ENCODE measurements at regions of chr19 and their contacts with region 1.

Region 1: DNA sequence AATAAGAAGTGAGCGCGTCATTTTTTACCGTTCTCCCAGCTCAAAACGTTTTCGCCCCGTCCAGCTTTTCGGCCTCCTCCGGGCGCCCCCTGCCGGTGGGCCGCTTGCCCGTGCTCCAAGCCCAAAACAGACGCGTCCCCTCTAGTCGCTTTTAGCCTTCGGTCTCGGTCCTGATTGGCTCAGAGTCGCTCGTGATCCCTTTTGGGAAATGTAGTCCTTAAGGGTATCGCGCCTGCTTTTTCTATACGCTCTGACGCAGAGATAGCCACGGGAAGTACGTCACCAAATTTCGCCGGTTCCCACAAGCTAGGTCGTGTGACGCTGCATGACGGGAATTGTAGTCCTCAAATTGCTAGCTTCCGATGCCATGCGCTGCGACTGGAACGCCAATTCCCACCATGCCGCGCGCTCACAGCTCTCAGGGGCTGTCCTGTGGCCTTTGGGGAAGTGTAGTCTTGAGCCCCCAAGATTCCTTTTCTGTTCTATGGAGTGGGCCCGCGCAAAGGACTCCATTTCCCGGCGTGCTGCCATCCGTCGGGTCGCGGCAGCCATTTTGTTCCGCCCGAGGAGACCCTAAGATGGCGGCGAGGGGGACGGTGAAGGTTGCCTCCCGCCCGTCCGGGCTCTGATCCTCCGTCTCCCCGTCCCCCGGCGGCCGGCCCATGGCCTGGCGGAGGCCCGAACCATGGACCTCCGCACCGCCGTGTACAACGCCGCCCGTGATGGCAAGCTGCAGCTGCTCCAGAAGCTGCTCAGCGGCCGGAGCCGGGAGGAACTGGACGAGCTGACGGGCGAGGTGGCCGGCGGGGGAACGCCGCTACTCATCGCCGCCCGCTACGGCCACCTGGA is at the start of gene FEM1A:
- DNase-seq: peak; percentile 96 to 100 (median 98)
- ATAC-seq: peak; percentile 94
- H3K4me3 ChIP-seq: peak within 1 kb of the TSS; percentile 73 to 82
- H3K4me3 Mint-ChIP-seq: peak within 1 kb of the TSS; percentile 86
- H3K27ac ChIP-seq: peak within 1 kb of the TSS; percentile 81 to 93
- H3K27ac Mint-ChIP-seq: peak within 1 kb of the TSS; percentile 89
- H3K4me1 ChIP-seq: peaks cover 16% of the 10 kb centered on the region
- H3K4me1 Mint-ChIP-seq: peaks cover 33% of the 10 kb centered on the region
- H3K27me3 ChIP-seq: no peaks in the 10 kb centered on the region
- H3K27me3 Mint-ChIP-seq: no peaks in the 10 kb centered on the region
- CTCF ChIP-seq: peak; percentile 99
- total RNA-seq, gene FEM1A: 16.7 to 17.4 TPM

Region 2: DNA sequence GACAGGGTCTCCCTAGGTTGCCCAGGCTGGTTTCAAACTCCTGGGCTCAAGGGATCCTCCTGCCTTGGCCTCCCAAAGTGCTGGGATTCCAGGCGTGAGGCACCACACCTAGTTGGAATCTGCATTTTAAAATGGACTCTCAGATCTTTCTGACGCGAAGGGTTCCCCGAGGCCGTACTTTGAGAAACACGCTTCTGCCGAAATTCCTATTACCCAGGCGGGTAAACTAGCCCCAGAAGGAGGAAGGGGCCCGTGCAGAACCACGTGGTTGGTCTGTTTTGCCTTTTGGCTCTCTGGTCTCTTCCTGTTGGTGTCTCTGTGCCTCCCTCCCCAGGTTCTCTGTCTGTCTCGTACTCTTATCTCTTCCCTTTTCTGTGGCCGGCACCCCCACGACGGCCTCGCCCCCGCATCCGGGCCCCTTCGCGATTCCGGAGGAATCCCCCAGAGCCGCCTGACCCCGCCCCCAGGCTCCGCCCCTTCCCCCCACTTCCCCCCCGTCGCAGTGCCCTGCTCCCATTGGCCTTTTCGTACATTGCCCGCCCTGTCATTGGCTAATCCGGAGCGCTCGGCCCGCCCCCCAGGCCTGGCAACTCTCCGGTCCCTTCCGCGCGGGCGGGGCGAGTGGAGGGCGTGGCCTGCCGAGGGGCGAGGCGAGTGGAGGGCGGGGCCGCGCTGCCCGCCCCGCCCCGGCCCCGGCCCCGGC is 152.4 kb before region 1 on chr19 and contains the start of gene TNFAIP8L1:
- CTCF ChIA-PET with region 1: interaction called, 4 read pairs
- POLR2A ChIA-PET with region 1: interaction called, 3 read pairs
- intact Hi-C with region 1: loop called (anchors 1 kb)
- DNase-seq: peak; percentile 97 to 100 (median 99)
- ATAC-seq: peak; percentile 94
- H3K4me3 ChIP-seq: peak within 1 kb of the TSS; percentile 83 to 94
- H3K4me3 Mint-ChIP-seq: peak within 1 kb of the TSS; percentile 94
- H3K27ac ChIP-seq: peak within 1 kb of the TSS; percentile 68 to 96
- H3K27ac Mint-ChIP-seq: peak within 1 kb of the TSS; percentile 95
- H3K4me1 ChIP-seq: peaks cover 45% of the 10 kb centered on the region
- H3K4me1 Mint-ChIP-seq: peaks cover 34% of the 10 kb centered on the region
- H3K27me3 ChIP-seq: no peaks in the 10 kb centered on the region
- H3K27me3 Mint-ChIP-seq: no peaks in the 10 kb centered on the region
- CTCF ChIP-seq: no peak
- total RNA-seq, gene TNFAIP8L1: 4.3 to 4.5 TPM

Region 3: DNA sequence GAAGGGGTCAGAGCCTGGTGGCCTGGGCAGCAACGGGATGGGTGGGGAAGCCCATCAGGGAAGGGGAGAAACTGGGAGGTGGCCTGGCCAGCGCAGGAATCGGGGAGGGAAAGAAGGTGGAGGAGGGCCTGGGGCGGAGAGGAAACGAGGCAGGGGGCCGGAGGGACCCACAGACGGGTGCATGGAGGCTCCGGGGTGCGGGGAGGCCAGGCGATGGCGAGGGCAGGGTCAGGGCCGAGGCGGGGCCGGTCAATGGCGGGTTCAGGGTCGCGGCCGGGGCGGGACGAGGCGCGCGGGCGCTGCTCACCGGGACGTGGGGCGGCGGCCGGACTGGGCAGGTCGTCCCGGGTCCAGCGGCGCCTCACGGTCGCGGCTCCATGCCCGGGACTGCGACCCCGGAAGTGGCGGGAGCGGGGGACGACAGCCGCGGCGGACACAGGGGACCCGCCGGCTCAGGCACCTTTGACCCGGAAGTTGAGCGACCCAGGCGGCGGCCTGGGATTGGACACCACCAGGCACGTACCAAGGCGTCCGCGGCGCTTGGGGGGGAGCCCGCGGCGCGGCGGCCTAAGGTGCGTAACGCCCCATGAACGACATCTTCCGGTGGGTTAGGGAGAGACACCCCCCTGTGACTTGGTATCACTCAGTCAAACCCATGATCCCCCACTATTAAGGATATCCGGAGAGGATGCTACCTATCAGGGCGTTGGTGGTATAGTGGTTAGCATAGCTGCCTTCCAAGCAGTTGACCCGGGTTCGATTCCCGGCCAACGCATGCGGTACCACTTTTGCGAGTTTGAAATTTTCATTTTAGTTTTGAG is 67.8 kb before region 1 on chr19 and contains the start of gene DPP9:
- CTCF ChIA-PET with region 1: interaction called, 68 read pairs
- POLR2A ChIA-PET with region 1: interaction called, 21 read pairs
- intact Hi-C with region 1: loop called (anchors 1 kb)
- DNase-seq: peak; percentile 93 to 99 (median 96)
- ATAC-seq: peak; percentile 94
- H3K4me3 ChIP-seq: peak within 1 kb of the TSS; percentile 76 to 78
- H3K4me3 Mint-ChIP-seq: peak within 1 kb of the TSS; percentile 93
- H3K27ac ChIP-seq: peak within 1 kb of the TSS; percentile 78 to 79
- H3K27ac Mint-ChIP-seq: peak within 1 kb of the TSS; percentile 97
- H3K4me1 ChIP-seq: peaks cover 31% of the 10 kb centered on the region
- H3K4me1 Mint-ChIP-seq: peaks cover 32% of the 10 kb centered on the region
- H3K27me3 ChIP-seq: no peaks in the 10 kb centered on the region
- H3K27me3 Mint-ChIP-seq: no peaks in the 10 kb centered on the region
- CTCF ChIP-seq: no peak
- total RNA-seq, gene DPP9: 85.5 to 86.6 TPM

Region 4: DNA sequence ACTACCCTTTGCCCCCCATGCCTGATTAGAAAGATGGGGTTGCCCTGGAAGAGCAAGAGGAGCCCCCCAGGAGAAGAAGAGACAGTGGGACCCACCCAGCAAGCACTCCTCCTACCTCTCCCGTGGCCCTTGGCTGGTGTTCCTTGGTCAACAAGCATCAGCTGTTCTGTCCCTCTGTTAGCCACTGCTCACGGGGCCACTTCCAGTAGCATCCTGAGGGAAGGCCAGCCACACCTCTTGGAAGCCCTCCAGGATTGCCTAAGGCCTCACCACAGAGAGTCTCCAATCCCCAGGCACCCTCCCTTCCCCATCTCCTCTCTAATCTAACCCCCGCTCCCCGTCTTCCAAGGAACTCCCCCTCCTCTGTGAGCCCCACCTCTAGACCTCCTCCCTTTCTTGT is 52.7 kb before region 1 on chr19:
- CTCF ChIA-PET with region 1: interaction called, 68 read pairs
- POLR2A ChIA-PET with region 1: interaction called, 11 read pairs
- intact Hi-C with region 1: no loop called
- DNase-seq: no peak
- ATAC-seq: no peak
- H3K4me3 ChIP-seq: no peak overlapping the region
- H3K4me3 Mint-ChIP-seq: no peak overlapping the region
- H3K27ac ChIP-seq: no peak overlapping the region
- H3K27ac Mint-ChIP-seq: no peak overlapping the region
- H3K4me1 ChIP-seq: no peaks in the 10 kb centered on the region
- H3K4me1 Mint-ChIP-seq: no peaks in the 10 kb centered on the region
- H3K27me3 ChIP-seq: no peaks in the 10 kb centered on the region
- H3K27me3 Mint-ChIP-seq: peaks cover 11% of the 10 kb centered on the region
- CTCF ChIP-seq: no peak

Region 5: GRCh38 chr19:4803736-4804695 is 12.6 kb after region 1 on chr19:
- CTCF ChIA-PET with region 1: interaction called, 41 read pairs
- POLR2A ChIA-PET with region 1: no interaction called
- intact Hi-C with region 1: no loop called
- DNase-seq: peak in 8 of 9 experiments; percentile 43 to 83 (median 70)
- ATAC-seq: peak; percentile 99
- H3K4me3 ChIP-seq: no peak overlapping the region
- H3K4me3 Mint-ChIP-seq: no peak overlapping the region
- H3K27ac ChIP-seq: no peak overlapping the region
- H3K27ac Mint-ChIP-seq: no peak overlapping the region
- H3K4me1 ChIP-seq: no peaks in the 10 kb centered on the region
- H3K4me1 Mint-ChIP-seq: no peaks in the 10 kb centered on the region
- H3K27me3 ChIP-seq: no peaks in the 10 kb centered on the region
- H3K27me3 Mint-ChIP-seq: no peaks in the 10 kb centered on the region
- CTCF ChIP-seq: peak; percentile 67

Region 6: GRCh38 chr19:4909897-4910593 is 118.7 kb after region 1 on chr19:
- CTCF ChIA-PET with region 1: interaction called, 5 read pairs
- POLR2A ChIA-PET with region 1: interaction called, 4 read pairs
- intact Hi-C with region 1: loop called (anchors 1 to 5 kb)
- DNase-seq: peak; percentile 85 to 96 (median 93)
- ATAC-seq: peak; percentile 82
- H3K4me3 ChIP-seq: peak overlapping the region; percentile 44 to 62
- H3K4me3 Mint-ChIP-seq: peak overlapping the region; percentile 99
- H3K27ac ChIP-seq: no peak overlapping the region
- H3K27ac Mint-ChIP-seq: no peak overlapping the region
- H3K4me1 ChIP-seq: peaks cover 57% of the 10 kb centered on the region
- H3K4me1 Mint-ChIP-seq: peaks cover 66% of the 10 kb centered on the region
- H3K27me3 ChIP-seq: no peaks in the 10 kb centered on the region
- H3K27me3 Mint-ChIP-seq: no peaks in the 10 kb centered on the region
- CTCF ChIP-seq: no peak

Region 7: GRCh38 chr19:5445071-5446062 is 654.0 kb after region 1 on chr19:
- CTCF ChIA-PET with region 1: no interaction called
- POLR2A ChIA-PET with region 1: no interaction called
- intact Hi-C with region 1: no loop called
- DNase-seq: no peak
- ATAC-seq: no peak
- H3K4me3 ChIP-seq: no peak overlapping the region
- H3K4me3 Mint-ChIP-seq: no peak overlapping the region
- H3K27ac ChIP-seq: no peak overlapping the region
- H3K27ac Mint-ChIP-seq: no peak overlapping the region
- H3K4me1 ChIP-seq: no peaks in the 10 kb centered on the region
- H3K4me1 Mint-ChIP-seq: no peaks in the 10 kb centered on the region
- H3K27me3 ChIP-seq: peaks cover 0 to 3% of the 10 kb centered on the region in 2 experiments
- H3K27me3 Mint-ChIP-seq: peaks cover 34% of the 10 kb centered on the region
- CTCF ChIP-seq: no peak

Region 8: DNA sequence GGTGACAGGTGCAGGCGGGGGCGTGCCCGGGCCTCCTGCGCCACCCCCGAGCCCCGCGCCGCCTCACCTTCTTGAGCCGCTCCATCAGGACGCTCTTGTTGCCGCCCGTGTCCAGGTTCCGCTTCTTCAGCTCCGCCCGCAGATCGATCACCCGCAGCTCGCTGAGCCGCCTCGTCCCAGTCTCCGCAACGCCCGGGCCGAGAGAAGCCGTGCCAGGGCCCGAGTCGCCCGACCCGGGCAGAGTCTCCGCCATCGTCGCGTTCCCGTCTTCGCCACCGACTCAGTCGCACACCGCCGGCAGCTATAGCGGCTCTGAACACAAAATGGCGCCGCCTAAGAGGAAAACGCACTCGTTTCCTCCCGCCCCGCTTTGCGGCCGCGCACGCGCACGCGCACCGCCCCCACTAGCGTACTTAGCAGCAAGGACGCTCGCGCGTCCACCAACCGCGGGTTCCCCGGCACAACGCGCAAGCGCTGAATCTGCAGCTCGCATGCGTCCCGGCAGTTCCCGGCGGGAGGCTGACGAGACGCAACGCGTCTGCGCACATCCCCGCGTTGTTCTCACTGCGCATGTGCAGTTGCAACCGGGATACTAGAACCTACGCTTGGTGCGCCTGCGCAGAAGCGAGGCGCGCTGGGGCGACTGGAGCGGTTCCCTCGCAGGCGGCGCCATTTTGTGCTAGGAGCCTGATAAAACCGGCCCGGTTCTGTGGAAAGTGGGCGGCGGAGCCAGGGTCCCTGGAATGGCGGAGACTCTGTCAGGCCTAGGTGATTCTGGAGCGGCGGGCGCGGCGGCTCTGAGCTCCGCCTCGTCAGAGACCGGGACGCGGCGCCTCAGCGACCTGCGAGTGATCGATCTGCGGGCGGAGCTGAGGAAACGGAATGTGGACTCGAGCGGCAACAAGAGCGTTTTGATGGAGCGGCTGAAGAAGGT is 831.3 kb after region 1 on chr19 and contains the starts of genes SAFB and SAFB2:
- CTCF ChIA-PET with region 1: no interaction called
- POLR2A ChIA-PET with region 1: no interaction called
- intact Hi-C with region 1: loop called in 1 of 2 experiments (anchors 2 kb)
- DNase-seq: peak; percentile 99 to 100 (median 99)
- ATAC-seq: peak; percentile 87
- H3K4me3 ChIP-seq: peak within 1 kb of the TSS; percentile 91 to 93
- H3K4me3 Mint-ChIP-seq: peak within 1 kb of the TSS; percentile 100
- H3K27ac ChIP-seq: peak within 1 kb of the TSS; percentile 90 to 94
- H3K27ac Mint-ChIP-seq: peak within 1 kb of the TSS; percentile 99
- H3K4me1 ChIP-seq: peaks cover 77% of the 10 kb centered on the region
- H3K4me1 Mint-ChIP-seq: peaks cover 69% of the 10 kb centered on the region
- H3K27me3 ChIP-seq: no peaks in the 10 kb centered on the region
- H3K27me3 Mint-ChIP-seq: no peaks in the 10 kb centered on the region
- CTCF ChIP-seq: no peak
- total RNA-seq, gene SAFB: 190 to 191 TPM
- total RNA-seq, gene SAFB2: 293 to 302 TPM